ENCODE measurements at regions of chr5 and their contacts with region 1.

Region 1: DNA sequence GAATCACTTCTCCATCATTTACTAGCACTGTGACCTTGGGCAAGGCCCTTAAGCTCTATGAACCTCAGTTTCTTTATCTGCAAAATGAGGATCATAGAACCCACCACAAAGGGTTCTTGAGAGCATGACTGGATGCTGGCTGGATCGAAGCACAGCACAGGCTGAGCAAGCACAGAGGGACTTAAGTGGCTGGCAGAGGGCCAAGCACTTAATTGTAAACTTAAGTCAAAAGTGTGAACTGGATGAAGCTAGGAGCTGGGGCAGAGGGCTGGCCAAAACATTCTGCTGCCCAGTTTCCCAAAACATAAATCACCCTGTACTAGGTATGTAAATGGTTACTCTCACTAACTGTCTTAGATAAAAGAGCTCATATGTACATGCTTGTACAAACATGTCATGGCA is 112.3 kb upstream of the WWC1 start:
- DNase-seq: peak; percentile 86
- H3K4me3 ChIP-seq: no peak overlapping the region
- H3K27ac ChIP-seq: peak overlapping the region in 3 of 4 donors; percentile 74 to 86 (median 77)
- H3K4me1 ChIP-seq: peaks cover 0 to 45% (median 31%) of the 10 kb centered on the region in 4 donors
- H3K27me3 ChIP-seq: no peaks in the 10 kb centered on the region
- CTCF ChIP-seq: no peak
- EP300 ChIP-seq: peak in 3 of 4 donors; percentile 52 to 70 (median 62)
- POLR2A ChIP-seq: no peak

Region 2: GRCh38 chr5:168086104-168086610 is 93.0 kb before region 1 on chr5:
- intact Hi-C with region 1: loop called (anchors 1 kb)
- DNase-seq: peak; percentile 80
- H3K4me3 ChIP-seq: no peak overlapping the region
- H3K27ac ChIP-seq: peak overlapping the region in 3 of 4 donors; percentile 40 to 73 (median 53)
- H3K4me1 ChIP-seq: peaks cover 0 to 29% (median 28%) of the 10 kb centered on the region in 4 donors
- H3K27me3 ChIP-seq: no peaks in the 10 kb centered on the region
- CTCF ChIP-seq: peak in 1 of 4 experiments; percentile 9
- EP300 ChIP-seq: peak; percentile 36 to 95 (median 86)
- POLR2A ChIP-seq: no peak

Region 3: GRCh38 chr5:168097876-168098653 is 81.1 kb before region 1 on chr5:
- intact Hi-C with region 1: no loop called
- DNase-seq: no peak
- H3K4me3 ChIP-seq: no peak overlapping the region
- H3K27ac ChIP-seq: no peak overlapping the region
- H3K4me1 ChIP-seq: peaks cover 0 to 8% (median 6%) of the 10 kb centered on the region in 4 donors
- H3K27me3 ChIP-seq: no peaks in the 10 kb centered on the region
- CTCF ChIP-seq: no peak
- EP300 ChIP-seq: no peak
- POLR2A ChIP-seq: no peak